ENCODE measurements at regions of chr22 and their contacts with region 1.

Region 1: DNA sequence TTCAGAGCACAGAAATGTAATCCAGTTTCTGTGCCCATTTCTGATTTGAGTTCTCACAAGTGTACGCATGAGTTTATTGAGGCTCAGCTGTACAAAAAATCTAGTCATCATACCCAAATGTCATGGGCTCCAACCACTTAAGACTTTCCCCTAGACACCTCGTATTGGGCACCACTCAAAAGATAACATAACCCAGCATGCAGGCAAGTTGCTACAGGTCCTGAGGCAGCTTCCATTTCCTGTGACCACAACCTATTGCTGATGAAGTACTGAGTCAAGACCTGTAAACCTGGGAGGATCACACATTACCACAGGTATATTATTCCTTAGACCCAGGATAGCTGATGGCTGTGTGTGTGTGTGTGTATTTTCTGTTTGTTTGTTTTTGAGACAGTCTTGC is 95.2 kb downstream of the MRTFA start:
- DNase-seq: no peak
- ATAC-seq: no peak
- H3K4me3 ChIP-seq: no peak overlapping the region
- H3K4me3 Mint-ChIP-seq: no peak overlapping the region
- H3K27ac ChIP-seq: no peak overlapping the region
- H3K27ac Mint-ChIP-seq: peak overlapping the region; percentile 39
- H3K4me1 ChIP-seq: no peaks in the 10 kb centered on the region
- H3K4me1 Mint-ChIP-seq: peaks cover 41% of the 10 kb centered on the region
- H3K27me3 ChIP-seq: no peaks in the 10 kb centered on the region
- H3K27me3 Mint-ChIP-seq: no peaks in the 10 kb centered on the region
- CTCF ChIP-seq: no peak

Region 2: GRCh38 chr22:40597526-40598430 is 56.5 kb after region 1 on chr22:
- CTCF ChIA-PET with region 1: no interaction called
- POLR2A ChIA-PET with region 1: no interaction called
- intact Hi-C with region 1: loop called in 1 of 2 experiments (anchors 10 kb)
- DNase-seq: no peak
- ATAC-seq: no peak
- H3K4me3 ChIP-seq: no peak overlapping the region
- H3K4me3 Mint-ChIP-seq: no peak overlapping the region
- H3K27ac ChIP-seq: no peak overlapping the region
- H3K27ac Mint-ChIP-seq: no peak overlapping the region
- H3K4me1 ChIP-seq: peaks cover 3% of the 10 kb centered on the region
- H3K4me1 Mint-ChIP-seq: peaks cover 63% of the 10 kb centered on the region
- H3K27me3 ChIP-seq: no peaks in the 10 kb centered on the region
- H3K27me3 Mint-ChIP-seq: no peaks in the 10 kb centered on the region
- CTCF ChIP-seq: no peak

Region 3: GRCh38 chr22:40728731-40729189 is 187.5 kb after region 1 on chr22:
- CTCF ChIA-PET with region 1: no interaction called
- POLR2A ChIA-PET with region 1: no interaction called
- intact Hi-C with region 1: no loop called
- DNase-seq: peak; percentile 58 to 86 (median 70)
- ATAC-seq: peak; percentile 61
- H3K4me3 ChIP-seq: no peak overlapping the region
- H3K4me3 Mint-ChIP-seq: peak overlapping the region; percentile 73
- H3K27ac ChIP-seq: peak overlapping the region; percentile 64 to 71
- H3K27ac Mint-ChIP-seq: peak overlapping the region; percentile 93
- H3K4me1 ChIP-seq: peaks cover 72% of the 10 kb centered on the region
- H3K4me1 Mint-ChIP-seq: peaks cover 64% of the 10 kb centered on the region
- H3K27me3 ChIP-seq: no peaks in the 10 kb centered on the region
- H3K27me3 Mint-ChIP-seq: no peaks in the 10 kb centered on the region
- CTCF ChIP-seq: no peak

Measured in CD4-positive, alpha-beta T cell (primary cell).